ENCODE measurements at regions of chr20 and their contacts with region 1.

Region 1: GRCh38 chr20:36314734-36315541 is 8.8 kb downstream of the DLGAP4 start:
- DNase-seq: no peak
- H3K4me3 Mint-ChIP-seq: no peak overlapping the region
- H3K27ac Mint-ChIP-seq: no peak overlapping the region
- H3K4me1 Mint-ChIP-seq: peaks cover 11% of the 10 kb centered on the region
- H3K27me3 Mint-ChIP-seq: peaks cover 84% of the 10 kb centered on the region
- CTCF ChIP-seq: no peak

Region 2: DNA sequence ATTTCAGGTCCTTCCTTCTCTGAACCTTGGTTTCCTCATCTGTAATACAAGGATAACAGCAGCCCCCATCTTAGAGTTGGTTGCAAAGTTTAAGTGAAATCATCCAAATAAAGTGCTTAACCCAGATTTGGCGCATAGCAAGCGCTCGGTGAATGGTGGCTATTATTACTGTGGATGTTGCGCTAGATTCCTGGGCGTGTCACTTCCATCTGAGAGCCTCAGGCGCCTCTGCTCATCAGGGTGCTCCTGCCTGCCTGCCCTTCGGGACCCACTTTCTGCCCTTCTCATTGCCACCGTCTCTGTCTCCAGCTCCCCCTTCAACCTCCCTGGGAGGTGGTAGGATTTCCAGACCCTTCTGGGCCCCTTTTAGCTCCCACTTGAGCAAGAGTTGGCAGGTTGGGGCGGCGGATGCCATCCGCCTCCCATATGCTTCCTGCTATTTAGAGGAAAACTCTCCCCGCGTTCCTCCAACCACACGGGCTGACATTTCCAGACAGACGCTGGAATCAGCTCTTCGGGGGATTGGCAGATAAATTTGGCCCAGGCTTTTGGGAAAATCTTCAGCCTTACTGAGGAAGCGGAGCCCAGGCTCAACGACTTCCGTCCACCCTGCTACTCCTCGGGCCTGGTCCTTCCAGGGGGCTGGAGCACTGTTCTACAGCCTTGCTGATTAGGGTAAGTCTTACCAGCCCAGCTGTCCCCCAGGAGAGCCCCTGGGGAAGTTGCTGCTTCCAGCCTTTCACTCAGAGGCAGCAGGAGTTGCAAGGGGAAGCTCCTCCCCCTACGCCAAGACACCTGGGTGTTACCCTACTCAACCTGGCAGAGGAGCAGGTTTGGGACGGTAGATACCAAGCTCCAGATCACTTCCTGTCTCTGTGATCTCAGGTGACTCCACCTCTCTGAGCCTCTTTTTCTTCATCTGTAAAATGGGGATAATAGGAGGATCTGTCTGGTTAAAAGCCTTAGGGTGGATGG is 62.7 kb after region 1 on chr20:
- CTCF ChIA-PET with region 1: no interaction called
- intact Hi-C with region 1: loop called (anchors 10 kb)
- DNase-seq: no peak
- H3K4me3 Mint-ChIP-seq: no peak overlapping the region
- H3K27ac Mint-ChIP-seq: no peak overlapping the region
- H3K4me1 Mint-ChIP-seq: no peaks in the 10 kb centered on the region
- H3K27me3 Mint-ChIP-seq: peaks cover 98% of the 10 kb centered on the region
- CTCF ChIP-seq: no peak

Region 3: DNA sequence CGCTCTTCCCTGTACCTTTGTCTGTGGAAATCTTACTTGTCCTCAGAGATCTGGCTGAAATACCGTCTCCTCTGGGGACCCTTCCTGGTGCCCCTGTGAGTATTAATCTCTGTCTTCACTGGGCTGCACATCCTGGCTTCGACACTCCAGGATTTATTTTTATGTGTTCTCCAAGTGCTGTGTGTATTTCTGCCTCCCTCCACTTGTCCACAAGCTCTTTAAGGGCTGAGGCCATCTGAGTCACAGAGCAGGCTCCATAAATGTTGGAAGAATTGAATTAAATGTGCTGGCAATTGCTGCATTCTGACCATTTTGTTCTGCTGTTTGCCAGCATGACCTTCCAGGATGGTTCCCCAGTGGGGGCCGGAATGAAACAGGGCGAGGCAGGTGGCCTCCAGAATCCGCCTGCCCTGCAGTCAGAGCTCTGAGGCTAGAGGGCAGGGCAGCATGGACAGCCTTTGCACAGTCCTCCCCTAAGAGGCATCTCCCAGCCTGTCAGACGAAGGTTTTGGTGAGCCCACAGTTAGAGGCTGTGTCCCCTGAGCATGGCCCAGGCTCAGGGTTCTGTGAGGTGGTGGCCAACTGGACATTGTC is 97.0 kb after region 1 on chr20:
- CTCF ChIA-PET with region 1: no interaction called
- intact Hi-C with region 1: no loop called
- DNase-seq: no peak
- H3K4me3 Mint-ChIP-seq: no peak overlapping the region
- H3K27ac Mint-ChIP-seq: no peak overlapping the region
- H3K4me1 Mint-ChIP-seq: no peaks in the 10 kb centered on the region
- H3K27me3 Mint-ChIP-seq: peaks cover 77% of the 10 kb centered on the region
- CTCF ChIP-seq: no peak